ENCODE measurements at regions of chr12 and their contacts with region 1.

Region 1: GRCh38 chr12:121765573-121765972 is 27.9 kb downstream of the RHOF start:
- DNase-seq: no peak
- ATAC-seq: no peak
- H3K4me3 Mint-ChIP-seq: no peak overlapping the region
- H3K27ac Mint-ChIP-seq: no peak overlapping the region
- H3K4me1 Mint-ChIP-seq: no peaks in the 10 kb centered on the region
- H3K27me3 Mint-ChIP-seq: no peaks in the 10 kb centered on the region

Region 2: DNA sequence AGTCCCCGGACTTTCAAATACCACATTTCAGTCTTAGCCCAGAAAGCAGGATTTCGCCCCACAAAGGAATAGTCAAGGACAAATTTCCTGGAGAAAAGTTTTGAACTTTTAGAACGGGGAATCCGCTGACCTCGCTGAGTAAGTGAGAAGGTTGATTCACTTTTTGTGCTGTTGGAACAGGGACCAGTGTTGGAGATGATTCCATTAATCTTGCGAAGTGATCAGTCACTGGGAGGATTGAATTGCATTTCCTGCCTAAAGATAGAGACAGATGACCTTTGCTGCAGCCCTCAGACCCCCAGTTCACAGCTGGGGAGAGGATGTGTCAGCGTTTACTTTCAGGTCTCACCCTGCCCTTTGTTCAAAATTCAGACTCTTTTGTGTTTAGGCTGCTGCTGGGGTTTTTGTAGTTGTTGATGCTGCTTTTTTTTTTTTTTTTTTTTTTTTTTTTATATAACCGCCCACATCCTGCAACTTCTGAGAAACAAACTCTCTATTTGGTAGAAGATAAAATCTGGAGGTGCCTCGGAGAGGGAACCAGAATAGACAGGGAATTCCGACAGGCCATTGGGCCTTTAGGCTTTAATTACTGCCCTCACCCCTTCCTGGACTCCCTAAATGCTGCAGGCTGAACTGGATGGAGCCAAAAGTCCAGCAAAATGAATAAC is 175.0 kb before region 1 on chr12:
- POLR2A ChIA-PET with region 1: interaction called, 12 read pairs
- DNase-seq: peak; percentile 25 to 92 (median 70)
- ATAC-seq: peak; percentile 72 to 80
- H3K4me3 Mint-ChIP-seq: peak overlapping the region; percentile 65 to 91 (median 89)
- H3K27ac Mint-ChIP-seq: peak overlapping the region; percentile 95 to 99 (median 98)
- H3K4me1 Mint-ChIP-seq: peaks cover 13 to 40% (median 40%) of the 10 kb centered on the region in 4 donors
- H3K27me3 Mint-ChIP-seq: peaks cover 0 to 2% (median 0%) of the 10 kb centered on the region in 5 donors

Region 3: DNA sequence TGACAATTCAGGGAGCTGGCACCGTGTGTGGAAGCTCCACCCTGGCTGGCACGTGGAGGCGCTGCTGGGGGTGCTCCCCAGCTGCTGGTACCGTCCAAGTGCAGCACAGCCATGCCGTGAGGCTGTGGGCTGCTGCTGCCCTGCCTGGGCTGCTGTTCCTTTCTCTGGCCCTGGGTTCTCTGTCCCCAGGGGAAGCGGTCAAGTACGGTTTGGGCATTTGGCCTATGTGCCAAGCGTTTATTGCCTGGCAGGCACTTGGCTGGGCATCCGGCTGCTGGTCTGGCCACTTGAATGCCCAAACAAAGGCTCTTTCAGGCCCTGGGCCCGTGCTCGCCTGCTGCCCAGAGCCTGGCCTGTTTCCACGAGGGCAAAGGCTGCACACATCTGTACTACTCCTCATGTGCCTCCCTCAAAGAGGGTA is 11.7 kb before region 1 on chr12:
- POLR2A ChIA-PET with region 1: no interaction called
- DNase-seq: no peak
- ATAC-seq: no peak
- H3K4me3 Mint-ChIP-seq: no peak overlapping the region
- H3K27ac Mint-ChIP-seq: no peak overlapping the region
- H3K4me1 Mint-ChIP-seq: peaks cover 11 to 20% (median 16%) of the 10 kb centered on the region in 4 donors
- H3K27me3 Mint-ChIP-seq: no peaks in the 10 kb centered on the region